ENCODE measurements at regions of chr7 and their contacts with region 1.

Region 1: DNA sequence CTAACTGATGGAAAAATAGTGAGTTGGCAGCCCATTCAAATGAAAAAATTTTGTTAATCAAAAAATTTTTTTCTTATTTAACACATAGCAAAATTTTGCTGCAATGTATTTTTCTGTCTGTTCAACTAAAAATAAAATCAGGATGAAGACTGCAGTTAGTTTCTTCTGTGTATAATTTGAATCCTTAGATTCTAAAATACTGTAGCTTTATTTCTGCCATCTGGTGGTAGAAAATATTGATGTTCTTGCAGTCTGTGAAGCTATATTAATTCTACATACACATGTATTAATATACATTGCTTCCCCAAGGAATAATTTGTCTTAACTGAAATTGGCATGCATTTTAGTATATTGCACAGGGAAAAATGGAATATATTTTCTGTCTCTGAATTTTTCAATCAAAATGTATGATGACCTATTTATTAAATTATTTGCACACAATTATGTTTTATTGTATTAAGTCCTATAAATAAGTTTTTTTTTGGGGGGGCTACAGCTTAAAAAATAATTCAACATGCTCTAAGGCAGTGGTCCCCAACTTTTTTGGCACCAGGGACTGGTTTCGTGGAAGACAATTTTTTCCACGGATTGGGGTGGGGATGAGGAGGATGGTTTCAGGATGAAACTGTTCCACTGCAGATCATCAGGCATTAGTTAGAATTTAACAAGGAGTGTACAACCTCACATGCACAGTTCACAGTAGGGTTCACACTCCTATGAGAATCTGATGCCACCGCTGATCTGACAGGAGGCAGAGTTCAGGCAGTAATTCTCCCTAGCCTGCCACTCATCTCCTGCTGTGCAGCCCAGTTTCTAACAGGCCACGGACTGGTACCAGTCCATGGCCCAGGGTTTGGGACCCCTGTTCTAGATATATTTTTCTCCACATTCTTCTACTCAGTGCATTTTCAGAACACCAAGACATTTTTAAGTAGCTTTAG is 119.4 kb downstream of the GNAT3 start:
- DNase-seq: no peak
- ATAC-seq: no peak

Region 2: GRCh38 chr7:80060218-80060806 is 332.2 kb before region 1 on chr7:
- intact Hi-C with region 1: loop called (anchors 2 kb)
- DNase-seq: no peak
- ATAC-seq: no peak

Region 3: DNA sequence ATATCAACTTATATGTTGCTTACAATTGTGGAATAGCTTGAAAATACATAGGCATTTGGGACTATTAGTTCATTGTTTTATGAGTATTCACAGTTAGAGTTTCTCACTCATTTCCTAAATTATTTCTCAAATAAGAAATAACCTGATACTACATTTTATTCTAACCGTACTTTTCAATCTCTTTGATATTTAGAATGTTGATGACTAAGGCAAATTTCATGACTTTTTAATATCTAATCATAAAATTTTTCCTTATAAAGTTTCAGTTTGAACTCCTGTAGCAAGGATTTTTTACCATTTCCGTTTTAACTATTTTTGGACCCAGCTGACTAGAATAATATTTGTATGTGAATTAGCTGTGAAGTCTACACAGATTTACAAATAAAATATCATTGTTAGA is 299.1 kb before region 1 on chr7:
- intact Hi-C with region 1: loop called (anchors 5 kb)
- DNase-seq: no peak
- ATAC-seq: no peak

Region 4: GRCh38 chr7:80453699-80454340 is 61.3 kb after region 1 on chr7:
- intact Hi-C with region 1: no loop called
- DNase-seq: no peak
- ATAC-seq: no peak